ENCODE measurements at regions of chr6 and their contacts with region 1.

Region 1: GRCh38 chr6:125974214-125974866 is 12.0 kb upstream of the TRMT11 start:
- DNase-seq: no peak
- ATAC-seq: peak; percentile 87
- H3K4me3 Mint-ChIP-seq: no peak overlapping the region
- H3K27ac Mint-ChIP-seq: peak overlapping the region; percentile 55
- H3K4me1 Mint-ChIP-seq: peaks cover 9% of the 10 kb centered on the region
- H3K27me3 Mint-ChIP-seq: no peaks in the 10 kb centered on the region
- CTCF ChIP-seq: peak; percentile 52

Region 2: DNA sequence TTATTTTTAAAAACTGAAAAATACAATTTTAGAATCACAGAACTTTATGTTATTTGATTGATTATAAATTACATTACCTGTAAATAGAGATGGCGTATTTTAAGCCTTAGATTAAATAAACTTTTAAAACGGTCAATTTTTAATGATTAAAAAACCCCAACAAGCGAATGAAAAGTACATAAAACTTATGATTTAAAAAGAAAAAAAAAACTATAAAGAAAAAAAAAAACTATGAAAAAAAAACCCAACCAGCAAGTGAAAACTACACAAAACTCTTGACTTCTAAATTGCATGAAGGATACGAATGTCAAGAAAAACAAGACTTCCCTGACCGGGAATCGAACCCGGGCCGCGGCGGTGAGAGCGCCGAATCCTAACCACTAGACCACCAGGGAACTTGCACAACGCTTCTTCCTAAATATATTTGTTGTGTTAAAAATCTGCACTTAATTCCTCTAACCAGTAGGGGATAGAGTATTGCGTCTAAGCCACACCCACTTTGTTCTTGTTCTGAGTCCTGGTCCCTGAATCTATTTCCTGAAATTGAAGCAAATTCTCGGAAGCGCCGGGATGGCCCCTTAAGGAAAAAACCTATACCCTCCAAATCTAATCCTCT is 194.3 kb before region 1 on chr6:
- CTCF ChIA-PET with region 1: interaction called, 6 read pairs
- POLR2A ChIA-PET with region 1: interaction called, 4 read pairs
- intact Hi-C with region 1: loop called (anchors 5 kb)
- DNase-seq: peak; percentile 88
- ATAC-seq: peak; percentile 82
- H3K4me3 Mint-ChIP-seq: no peak overlapping the region
- H3K27ac Mint-ChIP-seq: no peak overlapping the region
- H3K4me1 Mint-ChIP-seq: peaks cover 16% of the 10 kb centered on the region
- H3K27me3 Mint-ChIP-seq: no peaks in the 10 kb centered on the region
- CTCF ChIP-seq: no peak

Region 3: GRCh38 chr6:125906158-125906998 is 68.0 kb before region 1 on chr6:
- CTCF ChIA-PET with region 1: interaction called, 13 read pairs
- POLR2A ChIA-PET with region 1: no interaction called
- intact Hi-C with region 1: no loop called
- DNase-seq: peak; percentile 57
- ATAC-seq: no peak
- H3K4me3 Mint-ChIP-seq: no peak overlapping the region
- H3K27ac Mint-ChIP-seq: no peak overlapping the region
- H3K4me1 Mint-ChIP-seq: peaks cover 38% of the 10 kb centered on the region
- H3K27me3 Mint-ChIP-seq: no peaks in the 10 kb centered on the region
- CTCF ChIP-seq: peak; percentile 83

Region 4: GRCh38 chr6:125951323-125951722 is 23.0 kb before region 1 on chr6:
- CTCF ChIA-PET with region 1: interaction called, 32 read pairs
- POLR2A ChIA-PET with region 1: no interaction called
- intact Hi-C with region 1: no loop called
- DNase-seq: no peak
- ATAC-seq: no peak
- H3K4me3 Mint-ChIP-seq: no peak overlapping the region
- H3K27ac Mint-ChIP-seq: no peak overlapping the region
- H3K4me1 Mint-ChIP-seq: peaks cover 5% of the 10 kb centered on the region
- H3K27me3 Mint-ChIP-seq: peaks cover 12% of the 10 kb centered on the region
- CTCF ChIP-seq: no peak

Region 5: DNA sequence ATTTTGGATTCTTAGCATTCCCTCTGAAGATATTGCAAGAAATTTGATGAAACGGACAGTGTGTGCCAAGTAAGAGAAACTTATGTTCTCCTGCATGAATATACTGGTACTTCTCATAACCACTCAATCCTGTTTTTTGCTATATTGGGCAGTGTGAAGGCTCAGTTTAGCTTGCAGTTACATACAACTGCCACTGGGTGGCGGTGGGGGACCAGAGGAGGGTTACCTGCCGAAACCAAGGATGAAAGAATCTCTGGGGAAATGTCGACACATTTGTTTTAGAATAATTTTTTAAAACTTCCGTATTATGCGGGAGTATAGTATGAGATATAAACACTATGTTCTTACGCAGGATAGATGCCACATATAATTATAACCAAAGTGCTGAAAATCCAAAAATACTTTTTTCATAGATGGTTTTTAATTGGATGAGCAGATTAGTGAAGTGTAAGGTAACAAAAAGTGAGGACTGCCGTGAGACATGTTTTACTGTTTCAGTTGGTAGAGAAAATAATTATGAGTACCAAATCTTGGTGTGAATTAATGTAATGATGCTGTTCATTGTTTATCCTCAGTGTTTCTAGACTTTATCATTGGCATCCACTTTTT is 21.7 kb after region 1 on chr6:
- CTCF ChIA-PET with region 1: interaction called, 17 read pairs
- POLR2A ChIA-PET with region 1: no interaction called
- intact Hi-C with region 1: no loop called
- DNase-seq: peak; percentile 56
- ATAC-seq: peak; percentile 99
- H3K4me3 Mint-ChIP-seq: peak overlapping the region; percentile 41
- H3K27ac Mint-ChIP-seq: no peak overlapping the region
- H3K4me1 Mint-ChIP-seq: peaks cover 34% of the 10 kb centered on the region
- H3K27me3 Mint-ChIP-seq: no peaks in the 10 kb centered on the region
- CTCF ChIP-seq: peak; percentile 98